Mucosa of descending colon (tissue), 3 donors: ENCODE measurements at regions of chr11 and their contacts with region 1.

Region 1: DNA sequence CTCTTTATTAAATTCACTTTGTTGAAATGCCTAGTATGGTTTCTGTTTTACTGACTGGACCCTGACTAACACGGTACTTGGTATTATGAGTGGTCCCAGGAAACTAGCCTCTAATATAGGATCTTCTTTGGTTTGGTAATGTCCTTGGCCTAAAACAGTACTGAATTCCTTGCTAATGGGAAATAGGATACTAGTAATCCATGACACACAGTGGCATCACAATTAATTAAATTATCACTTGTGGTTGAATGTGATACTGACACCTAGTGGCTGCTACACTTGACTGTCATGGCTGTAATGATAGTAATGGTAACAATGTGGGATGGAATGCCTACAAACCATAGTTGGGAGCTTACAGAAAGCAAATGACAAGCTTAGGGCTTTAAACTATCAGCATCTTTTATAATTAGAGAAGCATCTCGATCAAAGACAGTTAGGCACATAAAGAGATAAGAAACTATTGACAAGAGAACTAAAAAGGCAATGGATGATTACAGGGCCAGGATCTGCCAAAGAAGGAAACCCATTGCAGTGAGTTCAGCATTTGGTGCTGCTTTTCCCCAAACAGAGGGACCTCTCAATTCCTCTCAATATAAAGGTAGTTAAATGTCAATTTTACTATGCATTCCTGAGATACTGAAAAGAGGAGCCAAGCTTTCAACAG is 8.6 kb downstream of the DNHD1 start:
- DNase-seq: peak in 1 of 3 donors; percentile 70
- ATAC-seq: peak; percentile 79
- H3K4me3 ChIP-seq: no peak overlapping the region
- H3K4me1 ChIP-seq: no peaks in the 10 kb centered on the region
- CTCF ChIP-seq: peak; percentile 63

Region 2: GRCh38 chr11:6443269-6444003 is 62.3 kb before region 1 on chr11:
- intact Hi-C with region 1: loop called in 1 of 2 experiments (anchors 5 kb)
- DNase-seq: peak in 2 of 3 donors; percentile 64 to 72
- ATAC-seq: peak; percentile 86
- H3K4me3 ChIP-seq: no peak overlapping the region
- H3K4me1 ChIP-seq: no peaks in the 10 kb centered on the region
- CTCF ChIP-seq: peak; percentile 82

Region 3: DNA sequence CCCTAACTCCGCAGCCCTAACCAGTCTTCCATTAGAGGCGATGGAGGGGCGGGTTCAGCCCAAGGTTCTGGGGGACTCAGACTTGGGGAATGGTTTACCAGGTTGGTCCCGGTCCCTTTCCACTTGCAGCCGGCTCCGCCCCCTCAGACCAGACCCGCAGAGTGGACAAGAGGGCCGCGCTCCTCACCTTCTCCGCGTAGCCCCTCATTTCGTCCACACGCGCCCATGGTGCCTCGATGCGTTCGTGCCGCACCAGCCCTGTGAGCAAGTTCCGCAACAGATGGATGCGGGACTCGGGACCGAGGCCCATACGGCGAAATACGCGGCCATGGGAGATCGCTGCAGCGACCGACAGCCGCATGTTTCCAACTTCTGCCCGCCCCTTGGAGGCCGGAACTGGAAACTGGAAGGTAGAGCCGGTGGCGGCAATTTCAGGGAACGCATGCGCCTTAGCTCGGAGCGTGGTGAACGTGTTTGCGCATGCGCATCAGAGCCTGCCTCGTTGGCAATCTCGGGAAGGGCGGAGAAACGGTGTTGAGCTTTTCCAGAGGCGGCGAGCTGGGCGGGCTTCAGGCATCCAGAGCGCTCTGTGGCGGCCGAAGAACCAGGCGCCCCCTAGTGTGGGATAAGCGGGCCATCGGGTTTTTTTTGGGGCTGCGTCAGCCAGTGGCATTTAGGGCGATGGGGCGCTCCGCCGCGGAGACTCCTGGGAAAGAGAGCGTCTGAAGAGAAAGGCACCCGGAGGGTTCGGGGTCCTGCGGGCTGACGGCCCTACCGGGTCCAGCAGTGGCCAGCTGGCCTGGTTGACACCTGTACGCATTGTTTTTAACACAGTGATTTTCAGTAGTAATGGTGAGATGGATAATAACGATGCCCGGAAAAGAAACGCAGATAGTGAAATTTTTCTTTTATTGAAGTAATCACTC is 177.5 kb after region 1 on chr11 and contains the start of gene MRPL17:
- intact Hi-C with region 1: no loop called
- DNase-seq: peak; percentile 98 to 99 (median 99)
- ATAC-seq: peak; percentile 99
- H3K4me3 ChIP-seq: peak within 1 kb of the TSS; percentile 73
- H3K4me1 ChIP-seq: peaks cover 10% of the 10 kb centered on the region
- CTCF ChIP-seq: peak; percentile 94
- total RNA-seq, gene MRPL17: 21.2 to 29.7 (median 29.6) TPM

Region 4: DNA sequence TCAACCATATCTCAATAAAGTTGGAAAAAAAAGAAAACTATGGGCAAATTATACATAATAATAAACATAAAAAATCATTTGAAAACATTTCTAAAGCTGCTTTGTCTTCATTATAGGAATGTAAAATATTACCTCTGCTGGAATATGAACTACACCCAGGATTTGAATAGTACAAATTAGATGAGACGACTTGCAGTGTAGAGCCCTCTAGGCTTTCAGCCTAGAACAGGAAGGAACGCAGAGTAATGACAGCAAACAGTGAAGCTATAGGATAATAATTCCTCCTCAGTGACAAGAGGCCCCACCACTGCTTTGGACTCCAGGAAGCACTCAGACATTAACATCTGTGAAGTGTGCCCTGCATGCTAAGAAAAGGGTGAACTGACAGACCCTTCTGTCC is 284.8 kb after region 1 on chr11:
- intact Hi-C with region 1: no loop called
- DNase-seq: no peak
- ATAC-seq: no peak
- H3K4me3 ChIP-seq: no peak overlapping the region
- H3K4me1 ChIP-seq: no peaks in the 10 kb centered on the region
- CTCF ChIP-seq: no peak